ENCODE measurements at regions of chr18 and their contacts with region 1.

Region 1: DNA sequence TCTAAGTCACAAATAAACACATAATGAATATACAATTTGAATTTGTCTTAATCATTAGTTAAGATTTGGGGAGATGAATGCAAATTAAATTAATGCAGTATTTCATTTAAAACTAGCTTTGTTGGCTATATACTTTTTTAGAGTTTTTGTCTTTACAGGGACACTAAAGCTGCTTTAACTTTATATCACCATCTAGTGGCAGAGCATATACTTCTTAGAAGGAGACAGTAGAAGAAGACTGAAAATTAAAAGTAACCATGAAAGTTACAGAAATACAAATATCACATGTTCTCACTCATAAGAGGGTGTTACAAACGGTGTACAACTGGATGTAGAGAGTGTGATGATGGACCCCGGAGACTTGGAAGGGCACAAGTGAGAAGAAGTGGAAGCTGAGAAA is 268.3 kb upstream of the NETO1 start:
- DNase-seq: peak; percentile 52
- ATAC-seq: no peak
- H3K4me3 ChIP-seq: no peak overlapping the region
- H3K4me3 Mint-ChIP-seq: no peak overlapping the region
- H3K27ac ChIP-seq: no peak overlapping the region
- H3K27ac Mint-ChIP-seq: no peak overlapping the region
- H3K4me1 ChIP-seq: peaks cover 0 to 3% of the 10 kb centered on the region in 2 donors
- H3K4me1 Mint-ChIP-seq: peaks cover 9% of the 10 kb centered on the region
- H3K27me3 ChIP-seq: no peaks in the 10 kb centered on the region
- H3K27me3 Mint-ChIP-seq: no peaks in the 10 kb centered on the region
- CTCF ChIP-seq: peak; percentile 67

Region 2: GRCh38 chr18:72762515-72763122 is 373.5 kb before region 1 on chr18:
- CTCF ChIA-PET with region 1: interaction called, 55 read pairs
- POLR2A ChIA-PET with region 1: no interaction called
- intact Hi-C with region 1: loop called (anchors 1 kb)
- DNase-seq: peak; percentile 73
- ATAC-seq: peak; percentile 58
- H3K4me3 ChIP-seq: no peak overlapping the region
- H3K4me3 Mint-ChIP-seq: no peak overlapping the region
- H3K27ac ChIP-seq: no peak overlapping the region
- H3K27ac Mint-ChIP-seq: no peak overlapping the region
- H3K4me1 ChIP-seq: no peaks in the 10 kb centered on the region
- H3K4me1 Mint-ChIP-seq: no peaks in the 10 kb centered on the region
- H3K27me3 ChIP-seq: no peaks in the 10 kb centered on the region
- H3K27me3 Mint-ChIP-seq: no peaks in the 10 kb centered on the region
- CTCF ChIP-seq: peak; percentile 91

Region 3: DNA sequence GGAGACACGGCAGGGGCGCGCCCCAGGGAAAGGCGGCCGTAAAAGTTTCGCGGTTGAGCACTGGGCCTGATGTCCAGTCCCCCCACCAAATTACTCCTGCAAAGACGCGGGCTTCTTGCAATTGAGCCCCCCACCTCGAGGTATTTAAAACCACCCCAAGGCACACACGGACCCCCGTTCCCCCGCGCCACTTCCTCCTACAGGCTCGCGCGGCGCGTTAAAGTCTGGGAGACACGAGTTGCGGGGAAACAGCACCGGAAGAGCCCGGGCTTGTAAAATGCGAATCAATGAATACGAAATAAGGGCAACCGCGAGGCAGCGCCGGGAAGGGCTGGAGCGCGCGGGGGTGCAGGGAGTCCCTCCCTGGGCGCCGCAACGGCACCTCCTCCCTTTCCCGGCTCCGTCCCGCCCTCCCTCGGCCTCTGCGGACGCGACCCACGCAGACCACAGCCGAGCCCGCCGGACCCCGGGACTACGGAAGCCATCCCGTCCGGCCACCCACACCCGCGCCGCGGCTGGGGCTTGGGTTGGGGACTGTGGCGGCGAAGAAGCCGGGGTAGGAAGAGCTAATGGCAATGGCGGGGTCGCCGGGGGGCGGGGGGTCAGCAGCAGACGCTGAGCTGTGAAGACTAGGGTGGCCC is 267.4 kb before region 1 on chr18:
- CTCF ChIA-PET with region 1: interaction called, 4 read pairs
- POLR2A ChIA-PET with region 1: no interaction called
- intact Hi-C with region 1: loop called (anchors 1 kb)
- DNase-seq: peak; percentile 51
- ATAC-seq: no peak
- H3K4me3 ChIP-seq: peak overlapping the region; percentile 30 to 74 (median 68)
- H3K4me3 Mint-ChIP-seq: peak overlapping the region; percentile 84
- H3K27ac ChIP-seq: no peak overlapping the region
- H3K27ac Mint-ChIP-seq: peak overlapping the region; percentile 46
- H3K4me1 ChIP-seq: peaks cover 16 to 26% of the 10 kb centered on the region in 2 donors
- H3K4me1 Mint-ChIP-seq: peaks cover 26% of the 10 kb centered on the region
- H3K27me3 ChIP-seq: peaks cover 0 to 21% (median 0%) of the 10 kb centered on the region in 4 experiments
- H3K27me3 Mint-ChIP-seq: peaks cover 14% of the 10 kb centered on the region
- CTCF ChIP-seq: no peak

Region 4: DNA sequence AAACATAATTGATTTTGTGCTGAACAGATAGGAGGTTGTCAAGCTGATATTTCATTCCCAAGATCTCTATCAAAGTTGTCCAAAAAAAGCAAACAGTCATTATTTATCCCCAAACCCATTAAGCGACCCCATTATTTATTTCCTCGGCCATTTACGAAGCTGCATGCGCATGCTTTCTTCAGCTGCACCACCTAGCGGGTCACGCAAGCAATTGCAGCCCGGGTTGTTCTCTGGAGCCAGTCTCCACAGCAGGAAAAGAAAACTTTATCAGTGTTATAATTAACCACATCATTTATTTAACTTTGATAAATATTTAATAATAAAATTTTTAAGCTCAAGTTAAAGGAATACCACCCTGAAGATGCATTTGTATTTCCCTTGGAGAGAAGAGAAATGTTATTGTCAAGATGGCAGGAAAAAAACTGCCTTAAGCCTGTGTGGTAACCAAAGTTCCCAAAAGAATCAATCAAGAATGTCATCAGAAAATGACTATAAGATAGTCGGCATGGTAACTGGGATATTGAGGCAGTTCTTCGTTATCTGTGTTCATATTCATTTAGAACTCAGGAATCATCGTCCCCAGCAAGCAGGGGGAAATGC is 706.8 kb after region 1 on chr18:
- CTCF ChIA-PET with region 1: no interaction called
- POLR2A ChIA-PET with region 1: no interaction called
- intact Hi-C with region 1: loop called (anchors 5 kb)
- DNase-seq: peak; percentile 57
- ATAC-seq: peak; percentile 71
- H3K4me3 ChIP-seq: peak overlapping the region in 1 of 5 experiments; percentile 34
- H3K4me3 Mint-ChIP-seq: peak overlapping the region; percentile 57
- H3K27ac ChIP-seq: no peak overlapping the region
- H3K27ac Mint-ChIP-seq: no peak overlapping the region
- H3K4me1 ChIP-seq: no peaks in the 10 kb centered on the region
- H3K4me1 Mint-ChIP-seq: peaks cover 3% of the 10 kb centered on the region
- H3K27me3 ChIP-seq: peaks cover 0 to 4% (median 0%) of the 10 kb centered on the region in 4 experiments
- H3K27me3 Mint-ChIP-seq: peaks cover 5% of the 10 kb centered on the region
- CTCF ChIP-seq: peak; percentile 98